Esophagus squamous epithelium (tissue), 5 donors: ENCODE measurements at regions of chr17 and their contacts with region 1.

Region 1: DNA sequence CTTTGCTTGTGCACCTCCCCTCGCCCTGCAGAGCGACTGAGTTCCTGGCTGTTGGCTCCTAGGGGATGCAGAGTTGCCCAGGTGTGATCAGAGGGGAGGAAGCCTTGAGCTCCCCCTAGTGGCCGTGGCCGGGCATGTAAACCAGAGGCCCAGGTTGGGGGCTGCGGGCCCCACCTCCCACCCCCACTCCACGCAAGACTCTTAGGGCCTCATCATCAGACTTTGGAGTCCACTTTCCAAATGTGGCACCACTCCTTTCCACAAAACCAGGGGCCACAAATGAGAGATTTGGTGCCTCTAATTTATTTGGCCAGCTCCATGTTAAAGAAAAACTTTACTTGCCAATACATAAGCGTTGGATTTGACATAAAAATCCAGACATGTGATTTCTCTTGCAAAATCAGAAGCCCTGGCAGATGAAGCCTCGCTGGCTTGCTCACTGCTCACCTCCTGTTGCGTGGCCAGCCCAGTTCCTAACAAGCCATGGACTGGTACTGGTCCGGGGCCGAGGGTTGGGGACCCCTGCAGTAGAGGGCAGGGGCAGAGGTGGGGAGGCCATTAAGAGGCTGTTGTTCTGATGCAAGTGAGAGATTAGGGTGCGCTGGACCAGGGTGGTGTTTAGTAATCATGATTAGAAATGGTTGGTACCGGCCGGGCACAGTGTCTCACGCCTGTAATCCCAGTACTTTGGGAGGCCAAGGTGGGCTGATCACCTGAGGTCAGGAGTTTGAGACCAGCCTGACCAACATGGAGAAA is 28.7 kb upstream of the GAS7 start:
- DNase-seq: no peak
- H3K4me3 ChIP-seq: no peak overlapping the region
- H3K27ac ChIP-seq: no peak overlapping the region
- H3K4me1 ChIP-seq: no peaks in the 10 kb centered on the region
- H3K27me3 ChIP-seq: no peaks in the 10 kb centered on the region
- CTCF ChIP-seq: peak; percentile 71 to 84 (median 72)
- POLR2A ChIP-seq: no peak

Region 2: DNA sequence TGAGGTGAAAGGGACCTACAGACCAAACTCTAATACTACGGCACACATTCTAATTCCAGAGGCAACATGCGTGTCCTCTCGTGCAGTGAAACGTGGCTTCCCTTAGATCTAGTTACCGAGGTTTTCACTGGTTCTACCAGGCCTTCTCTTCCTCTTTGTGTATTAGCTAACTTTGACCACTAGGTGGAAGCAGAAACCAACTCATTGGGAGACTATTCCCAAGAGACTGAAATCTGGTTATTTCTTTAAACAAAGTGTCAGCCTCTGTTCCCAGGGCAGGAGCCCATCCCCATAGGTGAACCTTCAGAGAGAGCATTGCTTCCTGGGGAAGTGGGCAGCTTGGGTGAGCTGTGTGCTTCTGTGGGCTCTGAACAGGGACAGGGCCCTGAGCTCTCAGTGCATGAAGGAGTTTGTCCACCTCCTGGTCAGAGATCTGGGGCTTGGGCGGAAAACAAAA is 302.3 kb before region 1 on chr17:
- intact Hi-C with region 1: loop called (anchors 10 kb)
- DNase-seq: no peak
- H3K4me3 ChIP-seq: no peak overlapping the region
- H3K27ac ChIP-seq: no peak overlapping the region
- H3K4me1 ChIP-seq: peaks cover 0 to 7% (median 0%) of the 10 kb centered on the region in 3 donors
- H3K27me3 ChIP-seq: no peaks in the 10 kb centered on the region
- CTCF ChIP-seq: peak; percentile 33 to 82 (median 79)
- POLR2A ChIP-seq: no peak

Region 3: DNA sequence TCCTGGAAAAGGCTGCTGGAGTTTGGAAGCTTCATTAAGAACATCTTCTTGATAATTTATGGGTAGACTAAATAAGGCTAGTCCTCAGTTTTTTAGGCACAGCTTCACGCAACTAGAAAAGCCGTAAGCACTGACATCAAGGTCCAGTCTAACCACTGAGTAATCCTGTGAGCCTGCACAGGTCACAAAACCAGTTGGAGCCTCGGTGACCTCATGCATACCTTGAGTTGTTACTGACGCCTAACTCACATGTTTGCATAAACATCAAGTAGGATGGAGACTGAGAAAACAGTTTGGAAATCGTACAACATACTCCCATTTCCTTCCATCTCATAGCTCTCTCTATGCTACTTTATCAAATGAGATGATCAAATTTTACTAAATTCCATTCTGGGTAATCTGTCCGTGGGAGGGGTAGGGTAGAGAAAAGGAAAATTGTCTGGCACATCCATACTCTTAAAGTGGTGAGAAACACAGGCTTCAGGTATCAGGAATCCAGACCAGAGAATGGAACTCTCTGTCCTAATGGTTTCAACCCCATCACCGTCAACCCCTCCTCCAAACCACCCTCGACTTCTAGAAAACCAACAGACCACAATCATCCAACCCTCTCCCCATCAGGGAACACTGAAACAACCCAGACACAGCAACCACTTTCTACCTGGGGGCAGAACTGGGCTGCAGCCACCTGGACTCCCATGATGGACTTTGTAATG is 258.0 kb before region 1 on chr17:
- intact Hi-C with region 1: loop called (anchors 10 kb)
- DNase-seq: no peak
- H3K4me3 ChIP-seq: no peak overlapping the region
- H3K27ac ChIP-seq: no peak overlapping the region
- H3K4me1 ChIP-seq: peaks cover 0 to 27% (median 10%) of the 10 kb centered on the region in 3 donors
- H3K27me3 ChIP-seq: no peaks in the 10 kb centered on the region
- CTCF ChIP-seq: no peak
- POLR2A ChIP-seq: no peak